HEK293T (cell line): ENCODE measurements at regions of chrX and their contacts with region 1.

Region 1: DNA sequence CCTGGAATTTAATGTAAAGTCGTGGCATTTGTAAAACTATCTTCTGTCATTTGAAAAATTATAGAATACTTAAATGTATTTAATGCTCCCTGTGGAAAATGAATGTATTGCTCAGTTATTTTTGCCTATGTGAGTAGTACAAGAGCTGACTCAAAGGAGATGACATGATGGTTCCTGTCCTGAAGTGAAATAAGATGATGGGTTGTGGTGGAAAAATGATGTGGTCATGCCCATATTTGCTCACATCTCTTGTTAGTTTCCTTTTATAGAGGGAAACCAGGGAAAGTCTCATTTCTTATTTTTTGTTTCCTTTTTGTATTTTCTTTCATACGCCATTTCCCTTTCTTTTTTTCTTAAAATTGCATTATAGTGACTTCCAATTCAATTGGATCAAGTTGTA is 23.7 kb downstream of the PLS3 start:
- DNase-seq: no peak

Region 2: DNA sequence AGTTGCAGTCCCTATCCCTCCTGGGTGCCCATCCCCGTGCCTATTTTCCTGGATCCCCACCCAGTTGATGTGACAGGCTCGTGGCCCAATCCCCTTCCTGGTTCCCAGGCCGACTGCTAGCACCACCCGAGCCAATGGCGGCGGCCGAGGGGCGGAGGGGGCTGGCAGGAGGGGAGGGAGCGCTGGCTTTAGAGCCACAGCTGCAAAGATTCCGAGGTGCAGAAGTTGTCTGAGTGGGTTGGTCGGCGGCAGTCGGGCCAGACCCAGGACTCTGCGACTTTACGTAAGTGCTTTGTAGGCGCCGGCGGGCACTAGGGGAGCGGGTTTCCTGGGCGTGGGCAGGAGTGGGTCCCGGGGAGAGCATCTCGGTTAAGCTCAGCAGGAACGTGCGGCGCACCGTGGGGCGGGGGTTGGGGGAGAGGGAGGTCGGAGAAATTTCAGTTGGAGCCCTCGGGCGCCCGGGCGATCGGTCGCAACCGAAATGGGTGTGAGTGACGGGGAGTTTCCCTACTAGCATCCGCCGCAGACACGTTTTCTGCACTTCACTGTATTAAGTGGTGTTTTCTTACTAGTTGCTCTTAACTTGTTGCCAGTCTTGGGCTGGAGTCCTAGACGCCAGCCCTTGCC is 23.6 kb before region 1 on chrX and contains the start of gene PLS3:
- CTCF ChIA-PET with region 1: no interaction called
- POLR2A ChIA-PET with region 1: interaction called, 19 read pairs
- DNase-seq: peak; percentile 93

Region 3: DNA sequence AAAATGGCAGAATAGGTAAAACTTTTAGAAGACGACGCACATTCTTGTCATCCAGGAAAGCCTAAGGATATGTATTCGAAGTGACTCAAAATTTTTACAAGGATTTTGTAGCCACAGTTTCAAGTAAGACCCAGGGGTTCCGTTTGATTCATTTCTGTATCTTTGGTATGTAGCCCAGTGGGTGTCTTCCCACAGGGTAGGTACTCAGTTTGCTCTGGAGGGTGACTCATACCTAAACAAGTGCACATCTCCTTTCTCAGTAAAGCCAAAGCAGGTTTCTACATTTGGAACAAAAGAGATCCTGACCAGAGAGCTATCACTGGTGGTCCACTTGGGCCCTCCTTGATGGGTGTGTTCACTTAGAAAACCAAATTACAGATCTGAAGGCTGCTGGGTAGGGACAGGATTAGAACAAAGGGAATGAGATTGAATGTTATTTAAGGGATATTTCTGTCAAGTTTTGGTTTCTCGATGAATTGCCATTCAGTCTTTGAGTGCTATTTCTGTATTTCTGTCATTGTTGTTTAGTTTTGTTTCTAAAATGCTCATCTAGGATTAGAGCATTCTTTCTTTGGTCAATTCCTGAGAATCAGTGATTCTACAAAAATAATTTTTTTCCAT is 32.4 kb after region 1 on chrX:
- CTCF ChIA-PET with region 1: no interaction called
- POLR2A ChIA-PET with region 1: no interaction called
- DNase-seq: no peak